Activated CD4-positive, alpha-beta T cell treated with anti-CD3 and anti-CD28 coated beads for 36 hours (primary cell): ENCODE measurements at regions of chr11 and their contacts with region 1.

Region 1: DNA sequence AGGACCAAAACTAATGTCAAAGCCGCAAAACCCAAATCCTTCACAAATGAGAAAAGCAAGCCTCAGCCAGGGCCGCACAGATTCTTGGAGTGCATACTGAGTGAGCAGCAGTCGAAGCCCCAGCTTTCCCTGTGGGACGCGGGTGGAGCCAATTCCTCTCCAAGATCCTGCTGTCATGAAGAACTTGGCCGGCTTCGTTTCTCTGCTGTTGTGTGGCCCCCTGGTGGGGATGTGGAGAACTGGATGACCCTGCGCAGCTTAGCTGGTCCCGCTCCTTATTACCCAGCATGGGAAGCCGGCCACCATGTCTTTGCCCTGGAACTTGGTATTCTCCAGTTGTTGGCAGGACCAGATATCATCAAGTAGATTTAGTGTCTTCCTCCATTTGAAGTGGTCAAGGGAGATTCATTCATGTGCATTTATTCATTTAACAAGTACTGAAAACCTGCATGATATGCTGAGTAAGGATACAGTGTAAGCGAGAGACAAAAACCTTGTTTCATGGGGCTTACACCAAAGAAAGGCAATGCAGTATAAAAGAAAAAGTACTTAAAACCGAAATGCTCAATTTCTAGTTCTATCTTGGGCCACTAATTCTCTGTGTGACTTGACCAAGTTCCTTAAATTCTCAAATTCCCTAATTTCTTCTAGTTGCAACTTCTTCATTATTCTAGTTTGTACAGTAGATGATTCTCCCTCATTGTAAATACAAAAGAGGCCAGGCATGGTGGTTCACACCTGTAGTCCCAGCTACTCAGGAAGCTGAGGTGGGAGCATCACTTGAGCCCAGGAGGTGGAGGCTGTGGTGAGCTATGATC is 56.7 kb upstream of the CRTAM start:
- DNase-seq: peak; percentile 87
- ATAC-seq: peak; percentile 74
- H3K4me3 Mint-ChIP-seq: no peak overlapping the region
- H3K27ac Mint-ChIP-seq: no peak overlapping the region
- H3K4me1 Mint-ChIP-seq: peaks cover 21% of the 10 kb centered on the region
- H3K27me3 Mint-ChIP-seq: no peaks in the 10 kb centered on the region

Region 2: DNA sequence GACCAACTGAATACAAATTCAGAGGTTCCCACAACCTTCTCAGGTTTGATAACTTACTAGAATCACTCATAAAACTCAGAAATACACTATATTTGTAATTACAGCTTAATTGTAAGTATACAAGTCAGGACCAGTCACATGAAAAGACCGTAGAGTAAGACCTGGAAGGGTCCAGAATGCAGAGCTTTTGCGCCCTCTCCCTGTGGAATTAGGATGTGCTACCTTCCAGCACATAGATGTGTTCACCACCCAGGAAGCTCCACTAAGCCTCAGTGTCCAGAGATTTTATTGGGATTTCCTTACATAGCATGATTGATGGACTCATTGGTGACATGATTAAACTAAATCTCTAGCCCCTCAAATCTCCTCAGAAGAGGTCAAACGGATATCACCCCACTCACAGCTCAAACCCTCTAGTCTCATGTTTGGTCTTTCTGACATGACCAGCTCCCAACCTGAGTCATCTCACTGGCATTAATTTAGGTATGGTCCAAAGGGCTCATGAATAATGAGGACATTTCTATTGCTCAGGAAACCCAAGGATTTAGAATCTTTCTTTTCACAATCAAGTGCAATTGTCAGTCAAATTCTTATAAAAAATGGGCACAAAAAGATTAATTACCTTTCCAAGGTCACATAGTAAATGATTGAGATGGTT is 203.3 kb before region 1 on chr11:
- CTCF ChIA-PET with region 1: interaction called, 72 read pairs
- POLR2A ChIA-PET with region 1: no interaction called
- intact Hi-C with region 1: loop called (anchors 1 kb)
- DNase-seq: peak; percentile 16
- ATAC-seq: no peak
- H3K4me3 Mint-ChIP-seq: no peak overlapping the region
- H3K27ac Mint-ChIP-seq: no peak overlapping the region
- H3K4me1 Mint-ChIP-seq: peaks cover 8% of the 10 kb centered on the region
- H3K27me3 Mint-ChIP-seq: no peaks in the 10 kb centered on the region

Region 3: GRCh38 chr11:122655527-122656072 is 126.0 kb before region 1 on chr11 and contains the start of gene UBASH3B:
- CTCF ChIA-PET with region 1: interaction called, 12 read pairs
- POLR2A ChIA-PET with region 1: no interaction called
- intact Hi-C with region 1: loop called in 1 of 2 experiments (anchors 2 kb)
- DNase-seq: peak; percentile 77
- ATAC-seq: peak; percentile 74
- H3K4me3 Mint-ChIP-seq: peak within 1 kb of the TSS; percentile 91
- H3K27ac Mint-ChIP-seq: peak within 1 kb of the TSS; percentile 79
- H3K4me1 Mint-ChIP-seq: peaks cover 40% of the 10 kb centered on the region
- H3K27me3 Mint-ChIP-seq: peaks cover 6% of the 10 kb centered on the region
- total RNA-seq, gene UBASH3B: 16.2 to 20.1 TPM

Region 4: DNA sequence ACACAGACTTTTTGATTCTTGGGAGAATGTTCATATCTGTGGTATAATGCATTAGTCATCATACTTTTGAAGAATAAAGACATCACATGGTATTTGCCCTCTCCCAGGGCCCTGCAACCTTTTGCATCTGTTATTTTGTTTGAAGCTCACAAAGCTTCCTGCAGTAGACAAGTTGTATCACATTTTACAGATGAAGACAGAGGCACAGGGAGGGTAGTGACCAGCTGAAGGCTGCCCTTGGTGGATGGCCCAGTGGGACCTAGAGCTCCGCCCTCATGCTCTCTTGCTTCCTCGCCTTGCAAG is 59.7 kb before region 1 on chr11:
- CTCF ChIA-PET with region 1: interaction called, 4 read pairs
- POLR2A ChIA-PET with region 1: no interaction called
- intact Hi-C with region 1: loop called in 1 of 2 experiments (anchors 2 kb)
- DNase-seq: peak; percentile 42
- ATAC-seq: peak; percentile 72
- H3K4me3 Mint-ChIP-seq: no peak overlapping the region
- H3K27ac Mint-ChIP-seq: no peak overlapping the region
- H3K4me1 Mint-ChIP-seq: peaks cover 65% of the 10 kb centered on the region
- H3K27me3 Mint-ChIP-seq: no peaks in the 10 kb centered on the region

Region 5: GRCh38 chr11:122754553-122755322 is 26.8 kb before region 1 on chr11:
- CTCF ChIA-PET with region 1: interaction called, 35 read pairs
- POLR2A ChIA-PET with region 1: no interaction called
- intact Hi-C with region 1: loop called in 1 of 2 experiments (anchors 1 kb)
- DNase-seq: peak; percentile 52
- ATAC-seq: peak; percentile 47
- H3K4me3 Mint-ChIP-seq: no peak overlapping the region
- H3K27ac Mint-ChIP-seq: no peak overlapping the region
- H3K4me1 Mint-ChIP-seq: peaks cover 60% of the 10 kb centered on the region
- H3K27me3 Mint-ChIP-seq: peaks cover 3% of the 10 kb centered on the region